ENCODE measurements at regions of chr18 and their contacts with region 1.

Region 1: DNA sequence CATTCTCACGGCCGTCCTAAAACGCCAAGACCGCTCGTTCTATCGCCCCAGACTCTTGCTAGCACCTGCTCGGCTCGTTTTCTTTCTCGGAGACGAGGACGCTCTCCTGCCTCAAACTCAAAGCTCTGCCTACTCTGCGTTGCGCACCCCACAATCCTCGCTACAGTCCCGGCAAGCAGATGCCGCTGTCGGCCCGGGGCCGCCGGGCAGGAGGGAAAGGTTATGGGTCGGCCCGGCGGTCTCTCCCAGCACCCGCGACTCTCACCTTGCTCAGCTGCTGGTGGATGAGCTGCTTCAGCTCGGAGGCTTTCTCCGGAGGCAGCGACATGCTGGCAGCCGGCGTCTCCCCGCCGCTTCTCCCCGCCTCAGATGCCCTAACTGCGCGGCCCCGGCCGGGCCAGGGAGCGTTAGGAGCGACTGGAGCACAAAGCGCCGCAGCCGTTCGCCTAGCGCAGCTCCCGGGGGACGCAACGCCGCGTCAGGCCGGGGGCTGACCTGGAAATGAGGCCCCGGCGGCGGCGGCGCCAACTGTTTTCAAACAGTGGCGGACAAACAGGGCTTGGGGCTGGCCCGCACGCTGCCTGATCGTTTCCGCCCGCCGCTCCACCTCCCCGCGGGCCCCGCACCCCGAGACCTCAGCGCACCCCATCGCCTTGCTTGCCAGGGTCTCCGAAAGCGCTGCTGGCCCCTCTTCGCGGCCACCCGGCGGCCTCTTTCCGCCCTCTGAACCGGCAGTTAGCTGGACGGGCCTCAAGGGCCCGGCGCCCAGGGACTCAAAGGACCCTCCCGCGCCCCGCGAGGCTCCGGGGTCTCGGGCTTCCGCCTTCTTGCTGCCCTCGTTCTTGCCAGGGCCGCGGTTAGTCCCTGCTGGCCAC is at the starts of genes CEP76 and PSMG2:
- DNase-seq: peak; percentile 90
- ATAC-seq: peak; percentile 85
- H3K4me3 Mint-ChIP-seq: peak within 1 kb of the TSS; percentile 96
- H3K27ac Mint-ChIP-seq: peak within 1 kb of the TSS; percentile 96
- H3K4me1 Mint-ChIP-seq: peaks cover 30% of the 10 kb centered on the region
- H3K27me3 Mint-ChIP-seq: no peaks in the 10 kb centered on the region
- total RNA-seq, gene CEP76: 12.5 to 13.9 TPM
- total RNA-seq, gene PSMG2: 113 to 118 TPM

Region 2: GRCh38 chr18:11851146-11851805 is 851.2 kb before region 1 on chr18 and contains the start of gene CHMP1B:
- CTCF ChIA-PET with region 1: no interaction called
- POLR2A ChIA-PET with region 1: no interaction called
- intact Hi-C with region 1: loop called in 1 of 2 experiments (anchors 5 kb)
- DNase-seq: peak; percentile 98
- ATAC-seq: peak; percentile 92
- H3K4me3 Mint-ChIP-seq: peak within 1 kb of the TSS; percentile 91
- H3K27ac Mint-ChIP-seq: peak within 1 kb of the TSS; percentile 99
- H3K4me1 Mint-ChIP-seq: peaks cover 25% of the 10 kb centered on the region
- H3K27me3 Mint-ChIP-seq: no peaks in the 10 kb centered on the region
- total RNA-seq, gene CHMP1B: 20.4 to 20.9 TPM

Region 3: GRCh38 chr18:12657684-12658425 is 44.6 kb before region 1 on chr18 and contains the start of gene SPIRE1:
- CTCF ChIA-PET with region 1: no interaction called
- POLR2A ChIA-PET with region 1: no interaction called
- intact Hi-C with region 1: loop called in 1 of 2 experiments (anchors 2 kb)
- DNase-seq: peak; percentile 61
- ATAC-seq: peak; percentile 57
- H3K4me3 Mint-ChIP-seq: peak within 1 kb of the TSS; percentile 71
- H3K27ac Mint-ChIP-seq: no peak within 1 kb of the TSS
- H3K4me1 Mint-ChIP-seq: peaks cover 17% of the 10 kb centered on the region
- H3K27me3 Mint-ChIP-seq: peaks cover 20% of the 10 kb centered on the region
- total RNA-seq, gene SPIRE1: 3.0 to 3.8 TPM

Region 4: GRCh38 chr18:12947355-12948041 is 245.0 kb after region 1 on chr18 and contains the start of gene SEH1L:
- CTCF ChIA-PET with region 1: no interaction called
- POLR2A ChIA-PET with region 1: no interaction called
- intact Hi-C with region 1: loop called (anchors 1 kb)
- DNase-seq: peak; percentile 100
- ATAC-seq: peak; percentile 86
- H3K4me3 Mint-ChIP-seq: peak within 1 kb of the TSS; percentile 89
- H3K27ac Mint-ChIP-seq: peak within 1 kb of the TSS; percentile 97
- H3K4me1 Mint-ChIP-seq: peaks cover 34% of the 10 kb centered on the region
- H3K27me3 Mint-ChIP-seq: no peaks in the 10 kb centered on the region
- total RNA-seq, gene SEH1L: 100 to 107 TPM

Region 5: GRCh38 chr18:13137670-13138419 is 435.4 kb after region 1 on chr18:
- CTCF ChIA-PET with region 1: no interaction called
- POLR2A ChIA-PET with region 1: no interaction called
- intact Hi-C with region 1: loop called in 1 of 2 experiments (anchors 5 kb)
- DNase-seq: peak; percentile 76
- ATAC-seq: peak; percentile 78
- H3K4me3 Mint-ChIP-seq: peak overlapping the region; percentile 83
- H3K27ac Mint-ChIP-seq: peak overlapping the region; percentile 86
- H3K4me1 Mint-ChIP-seq: peaks cover 24% of the 10 kb centered on the region
- H3K27me3 Mint-ChIP-seq: peaks cover 2% of the 10 kb centered on the region

Region 6: DNA sequence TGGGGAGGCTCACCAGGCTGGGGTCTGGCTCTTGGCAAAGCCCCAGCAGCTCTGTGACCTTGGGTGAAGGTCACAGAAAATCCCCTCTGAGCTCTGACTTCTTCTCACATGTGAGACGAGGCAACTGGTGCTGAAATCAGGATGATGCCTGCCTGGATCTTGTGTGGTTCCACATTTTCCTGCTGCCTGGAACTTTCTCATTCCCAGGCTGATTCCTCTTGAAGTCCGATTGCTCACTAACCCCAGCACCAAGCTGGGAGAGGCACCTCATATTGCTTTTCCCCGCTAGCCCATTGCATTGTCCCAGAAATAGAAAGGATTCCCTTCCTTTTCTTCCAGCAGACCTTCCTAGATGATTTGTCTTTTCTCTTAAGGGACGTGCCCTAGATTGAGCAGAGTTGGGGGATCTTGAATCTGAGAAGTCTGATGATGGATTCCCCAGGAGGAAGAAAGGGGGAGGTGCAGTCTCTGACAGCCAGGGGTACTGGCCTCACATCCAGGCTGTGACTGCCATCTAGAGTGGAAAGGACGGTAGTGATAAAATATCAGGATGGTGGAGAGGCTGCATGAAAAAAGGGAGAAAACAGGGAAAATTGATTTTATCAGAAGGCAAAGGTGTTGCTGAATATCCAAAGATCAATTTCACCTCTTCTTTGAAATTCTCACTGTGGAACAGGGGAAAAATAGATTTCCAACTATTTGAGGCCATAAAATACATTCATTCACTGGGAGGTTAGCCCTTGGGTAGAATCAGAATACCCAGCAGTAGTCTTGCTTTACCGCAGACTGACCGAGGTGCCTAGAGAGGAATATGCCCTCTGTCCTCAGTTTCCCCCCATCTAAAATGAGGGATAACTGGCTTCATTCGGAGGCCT is 927.6 kb after region 1 on chr18:
- CTCF ChIA-PET with region 1: no interaction called
- POLR2A ChIA-PET with region 1: no interaction called
- intact Hi-C with region 1: no loop called
- DNase-seq: peak; percentile 69
- ATAC-seq: peak; percentile 98
- H3K4me3 Mint-ChIP-seq: no peak overlapping the region
- H3K27ac Mint-ChIP-seq: peak overlapping the region; percentile 52
- H3K4me1 Mint-ChIP-seq: peaks cover 4% of the 10 kb centered on the region
- H3K27me3 Mint-ChIP-seq: no peaks in the 10 kb centered on the region